ENCODE measurements at regions of chr3 and their contacts with region 1.

Region 1: GRCh38 chr3:48439820-48440589 is at the starts of genes CCDC51 and TMA7:
- DNase-seq: peak; percentile 99
- ATAC-seq: peak; percentile 97
- H3K4me3 ChIP-seq: peak within 1 kb of the TSS; percentile 74
- H3K27ac ChIP-seq: peak within 1 kb of the TSS; percentile 94
- H3K4me1 ChIP-seq: peaks cover 18% of the 10 kb centered on the region
- H3K27me3 ChIP-seq: no peaks in the 10 kb centered on the region
- CTCF ChIP-seq: no peak
- total RNA-seq, gene CCDC51: 11.4 TPM
- total RNA-seq, gene TMA7: 169 TPM

Region 2: GRCh38 chr3:48232734-48233133 is 207.3 kb before region 1 on chr3:
- intact Hi-C with region 1: loop called (anchors 5 kb)
- DNase-seq: peak; percentile 87
- ATAC-seq: peak; percentile 98
- H3K4me3 ChIP-seq: no peak overlapping the region
- H3K27ac ChIP-seq: no peak overlapping the region
- H3K4me1 ChIP-seq: no peaks in the 10 kb centered on the region
- H3K27me3 ChIP-seq: no peaks in the 10 kb centered on the region
- CTCF ChIP-seq: peak; percentile 67

Region 3: DNA sequence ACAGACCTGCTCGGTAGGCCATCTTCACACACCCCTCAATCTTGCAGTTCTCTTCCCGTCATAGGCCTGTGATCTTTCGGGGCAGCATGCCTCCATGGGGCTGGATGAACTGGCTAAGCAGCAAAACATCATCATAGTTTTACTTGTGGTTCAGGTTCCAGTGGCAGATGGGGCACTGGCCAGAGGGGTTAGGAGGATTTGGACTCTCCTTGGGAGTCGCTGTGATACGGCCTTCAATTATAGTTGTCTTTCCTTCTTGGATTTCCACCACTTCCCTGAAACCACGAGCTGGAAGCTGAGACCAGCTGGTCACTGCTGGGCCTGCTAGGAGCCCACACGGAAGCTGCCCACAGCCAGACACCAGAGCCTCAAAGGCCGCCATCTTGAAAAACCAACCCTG is 183.4 kb before region 1 on chr3:
- intact Hi-C with region 1: no loop called
- DNase-seq: no peak
- ATAC-seq: no peak
- H3K4me3 ChIP-seq: no peak overlapping the region
- H3K27ac ChIP-seq: no peak overlapping the region
- H3K4me1 ChIP-seq: no peaks in the 10 kb centered on the region
- H3K27me3 ChIP-seq: no peaks in the 10 kb centered on the region
- CTCF ChIP-seq: no peak

Region 4: GRCh38 chr3:48352547-48352946 is 87.5 kb before region 1 on chr3:
- intact Hi-C with region 1: no loop called
- DNase-seq: no peak
- ATAC-seq: no peak
- H3K4me3 ChIP-seq: no peak overlapping the region
- H3K27ac ChIP-seq: no peak overlapping the region
- H3K4me1 ChIP-seq: no peaks in the 10 kb centered on the region
- H3K27me3 ChIP-seq: no peaks in the 10 kb centered on the region
- CTCF ChIP-seq: no peak

Region 5: DNA sequence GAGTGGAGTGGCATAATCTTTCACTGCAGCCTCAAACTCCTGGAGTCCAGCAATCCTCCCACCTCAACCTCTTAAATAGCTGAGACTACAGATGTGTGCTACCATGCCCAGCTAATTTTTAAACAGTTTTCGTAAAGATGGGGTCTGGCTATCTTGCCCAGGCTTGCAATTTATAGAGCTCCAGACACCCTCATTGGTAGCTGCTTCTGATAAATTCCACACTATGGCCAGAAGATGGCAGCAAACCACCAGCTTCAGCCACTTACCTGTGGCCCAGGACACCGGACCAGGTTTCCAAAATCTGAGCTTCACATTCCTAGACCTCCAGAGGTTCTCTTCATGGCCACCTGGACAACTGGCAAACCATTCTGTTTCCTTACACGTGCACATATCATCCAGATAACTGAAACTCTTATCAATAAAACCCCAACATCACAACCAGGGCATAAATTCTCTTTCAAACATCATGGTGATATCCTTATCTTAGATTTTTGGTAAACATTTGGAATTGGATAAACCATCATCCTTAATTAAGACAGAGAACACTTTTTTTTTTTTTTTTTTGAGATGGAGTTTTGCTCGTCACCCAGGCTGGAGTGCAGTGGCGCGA is 39.1 kb before region 1 on chr3:
- intact Hi-C with region 1: loop called (anchors 5 kb)
- DNase-seq: no peak
- ATAC-seq: peak; percentile 80
- H3K4me3 ChIP-seq: no peak overlapping the region
- H3K27ac ChIP-seq: no peak overlapping the region
- H3K4me1 ChIP-seq: peaks cover 14% of the 10 kb centered on the region
- H3K27me3 ChIP-seq: no peaks in the 10 kb centered on the region
- CTCF ChIP-seq: peak; percentile 92

Measured in upper lobe of right lung (tissue), 1 donor.